A673 (cell line): ENCODE measurements at regions of chr12 and their contacts with region 1.

Region 1: GRCh38 chr12:109804820-109805761 is 28.1 kb downstream of the TRPV4 start:
- DNase-seq: peak; percentile 62
- H3K4me3 ChIP-seq: no peak overlapping the region
- H3K27ac ChIP-seq: no peak overlapping the region
- H3K4me1 ChIP-seq: no peaks in the 10 kb centered on the region
- H3K27me3 ChIP-seq: no peaks in the 10 kb centered on the region
- CTCF ChIP-seq: peak; percentile 93

Region 2: DNA sequence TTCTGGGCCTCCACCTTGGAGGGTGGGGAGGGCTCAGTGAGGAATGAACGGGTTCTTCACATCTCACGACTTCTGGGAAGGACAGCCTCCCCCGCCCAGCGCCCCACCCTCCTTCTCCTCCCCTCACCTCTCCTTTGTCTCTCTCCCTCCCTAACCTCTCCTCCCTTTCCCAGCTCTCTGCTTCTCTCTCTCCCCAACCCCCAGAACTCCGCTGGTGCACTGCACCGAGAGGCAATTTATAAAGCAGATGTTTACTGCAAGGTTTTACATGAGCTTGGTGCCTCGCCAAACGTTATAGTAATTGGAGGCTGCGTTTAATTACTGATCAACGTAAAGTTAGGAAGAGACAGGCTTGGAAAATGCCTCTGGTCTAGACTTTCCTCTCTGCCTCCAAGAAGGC is 134.4 kb before region 1 on chr12:
- CTCF ChIA-PET with region 1: no interaction called
- POLR2A ChIA-PET with region 1: no interaction called
- intact Hi-C with region 1: no loop called
- DNase-seq: no peak
- H3K4me3 ChIP-seq: no peak overlapping the region
- H3K27ac ChIP-seq: no peak overlapping the region
- H3K4me1 ChIP-seq: no peaks in the 10 kb centered on the region
- H3K27me3 ChIP-seq: peaks cover 11% of the 10 kb centered on the region
- CTCF ChIP-seq: no peak

Region 3: GRCh38 chr12:109844983-109845823 is 40.1 kb after region 1 on chr12:
- CTCF ChIA-PET with region 1: interaction called, 5 read pairs
- POLR2A ChIA-PET with region 1: no interaction called
- intact Hi-C with region 1: loop called (anchors 1 kb)
- DNase-seq: peak; percentile 91
- H3K4me3 ChIP-seq: peak overlapping the region; percentile 20
- H3K27ac ChIP-seq: no peak overlapping the region
- H3K4me1 ChIP-seq: no peaks in the 10 kb centered on the region
- H3K27me3 ChIP-seq: no peaks in the 10 kb centered on the region
- CTCF ChIP-seq: peak; percentile 99

Region 4: GRCh38 chr12:109880016-109880931 is 75.2 kb after region 1 on chr12 and contains the start of gene GLTP:
- CTCF ChIA-PET with region 1: no interaction called
- POLR2A ChIA-PET with region 1: no interaction called
- intact Hi-C with region 1: loop called (anchors 1 kb)
- DNase-seq: peak; percentile 91
- H3K4me3 ChIP-seq: peak within 1 kb of the TSS; percentile 65
- H3K27ac ChIP-seq: peak within 1 kb of the TSS; percentile 37
- H3K4me1 ChIP-seq: peaks cover 5% of the 10 kb centered on the region
- H3K27me3 ChIP-seq: peaks cover 4% of the 10 kb centered on the region
- CTCF ChIP-seq: no peak; the same call in 1 of the 2 replicates
- total RNA-seq, gene GLTP: 20.2 and 20.7 TPM in 2 replicates